Gastrocnemius medialis (tissue), 4 donors: ENCODE measurements at regions of chr4 and their contacts with region 1.

Region 1: GRCh38 chr4:85968945-85969819 is 390.7 kb downstream of the MAPK10 start:
- DNase-seq: no peak
- ATAC-seq: peak; percentile 64 to 72
- H3K4me3 ChIP-seq: no peak overlapping the region
- H3K27ac ChIP-seq: no peak overlapping the region
- H3K4me1 ChIP-seq: peaks cover 0 to 7% of the 10 kb centered on the region in 2 donors
- H3K27me3 ChIP-seq: no peaks in the 10 kb centered on the region
- CTCF ChIP-seq: peak in 4 of 5 experiments; percentile 43 to 62 (median 50)
- POLR2A ChIP-seq: no peak

Region 2: DNA sequence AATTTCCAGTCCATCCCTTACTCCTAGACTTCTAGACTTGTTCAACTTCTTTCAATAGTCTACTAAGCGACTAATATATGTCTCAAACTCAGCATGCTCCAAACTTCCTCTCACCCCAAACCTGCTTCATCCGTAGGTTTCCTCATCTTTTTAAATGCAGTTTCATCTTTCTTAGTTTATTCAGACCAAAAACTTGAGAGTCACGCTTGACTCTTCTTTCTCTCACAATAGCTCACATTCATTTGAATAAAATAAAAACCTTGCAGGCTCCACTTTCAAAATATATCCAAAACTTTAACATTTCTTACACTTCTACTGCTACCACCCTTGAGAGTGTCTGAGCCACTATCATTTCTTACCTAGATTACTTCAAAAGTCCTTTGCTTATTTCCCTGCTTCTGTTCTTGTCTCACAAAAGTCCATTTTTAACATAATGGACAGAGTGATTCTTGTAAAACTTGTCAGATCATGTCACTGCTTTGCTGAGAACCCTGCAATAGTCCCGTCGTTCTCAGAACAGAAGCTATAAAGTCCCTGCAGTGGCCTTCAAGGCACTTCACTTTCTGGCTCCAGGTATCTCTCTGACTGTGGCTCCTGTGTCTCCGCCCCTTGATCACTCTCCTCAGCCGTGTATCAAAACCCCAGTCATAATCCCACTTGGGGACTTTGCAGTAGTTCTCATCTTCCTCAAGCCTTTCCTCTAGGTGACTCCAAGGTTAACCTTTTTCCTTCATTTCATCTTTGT is 326.7 kb before region 1 on chr4:
- in situ Hi-C with region 1: no loop called
- intact Hi-C with region 1: no loop called
- DNase-seq: no peak
- ATAC-seq: no peak
- H3K4me3 ChIP-seq: no peak overlapping the region
- H3K27ac ChIP-seq: no peak overlapping the region
- H3K4me1 ChIP-seq: no peaks in the 10 kb centered on the region
- H3K27me3 ChIP-seq: no peaks in the 10 kb centered on the region
- CTCF ChIP-seq: no peak
- POLR2A ChIP-seq: no peak

Region 3: GRCh38 chr4:85756938-85757337 is 212.2 kb before region 1 on chr4:
- in situ Hi-C with region 1: no loop called
- intact Hi-C with region 1: loop called (anchors 5 kb)
- DNase-seq: no peak
- ATAC-seq: no peak
- H3K4me3 ChIP-seq: no peak overlapping the region
- H3K27ac ChIP-seq: no peak overlapping the region
- H3K4me1 ChIP-seq: peaks cover 1 to 4% of the 10 kb centered on the region in 2 donors
- H3K27me3 ChIP-seq: no peaks in the 10 kb centered on the region
- CTCF ChIP-seq: peak in 2 of 5 experiments; percentile 37 to 46
- POLR2A ChIP-seq: no peak

Region 4: DNA sequence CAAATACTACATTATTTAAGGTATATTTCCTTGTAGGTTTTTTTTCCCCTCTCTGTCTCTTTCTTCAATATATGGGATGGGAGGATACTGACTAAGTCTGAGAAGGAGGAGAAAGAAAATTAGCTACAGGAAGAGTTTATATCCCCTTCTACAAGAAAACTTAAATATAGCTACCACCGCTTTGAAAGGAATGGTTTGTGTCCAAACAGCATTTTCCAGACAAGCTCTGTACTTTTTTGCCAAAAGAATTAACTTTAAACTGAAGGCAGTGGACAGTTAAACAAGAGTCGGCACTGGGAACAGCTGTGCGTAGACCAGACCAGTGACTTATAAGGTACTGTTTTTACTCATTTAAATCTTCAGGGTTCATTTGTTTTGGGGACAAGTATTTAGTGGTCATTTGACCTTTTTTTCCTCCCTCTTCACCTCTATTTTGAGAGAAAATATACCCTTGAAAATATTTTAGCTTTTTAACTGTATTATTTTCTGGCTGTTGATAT is 190.5 kb before region 1 on chr4:
- in situ Hi-C with region 1: loop called in 1 of 4 experiments (anchors 25 kb)
- intact Hi-C with region 1: no loop called
- DNase-seq: no peak
- ATAC-seq: peak in 1 of 2 donors; percentile 30
- H3K4me3 ChIP-seq: peak overlapping the region; percentile 1 to 34 (median 10)
- H3K27ac ChIP-seq: peak overlapping the region; percentile 21 to 60 (median 54)
- H3K4me1 ChIP-seq: peaks cover 17 to 22% of the 10 kb centered on the region in 2 donors
- H3K27me3 ChIP-seq: no peaks in the 10 kb centered on the region
- CTCF ChIP-seq: no peak
- POLR2A ChIP-seq: no peak

Region 5: GRCh38 chr4:85798012-85798770 is 171.0 kb before region 1 on chr4:
- in situ Hi-C with region 1: loop called in 3 of 4 experiments (anchors 5 to 25 kb)
- intact Hi-C with region 1: loop called (anchors 2 kb)
- DNase-seq: no peak
- ATAC-seq: no peak
- H3K4me3 ChIP-seq: no peak overlapping the region
- H3K27ac ChIP-seq: no peak overlapping the region
- H3K4me1 ChIP-seq: peaks cover 0 to 5% of the 10 kb centered on the region in 2 donors
- H3K27me3 ChIP-seq: no peaks in the 10 kb centered on the region
- CTCF ChIP-seq: no peak
- POLR2A ChIP-seq: no peak

Region 6: GRCh38 chr4:85860066-85860740 is 109.0 kb before region 1 on chr4:
- in situ Hi-C with region 1: no loop called
- intact Hi-C with region 1: no loop called
- DNase-seq: no peak
- ATAC-seq: peak; percentile 36 to 59
- H3K4me3 ChIP-seq: no peak overlapping the region
- H3K27ac ChIP-seq: peak overlapping the region in 3 of 4 donors; percentile 2 to 45 (median 16)
- H3K4me1 ChIP-seq: peaks cover 13 to 18% of the 10 kb centered on the region in 2 donors
- H3K27me3 ChIP-seq: no peaks in the 10 kb centered on the region
- CTCF ChIP-seq: no peak
- POLR2A ChIP-seq: no peak

Region 7: GRCh38 chr4:85979276-85979675 is 10.1 kb after region 1 on chr4:
- in situ Hi-C with region 1: no loop called
- intact Hi-C with region 1: no loop called
- DNase-seq: no peak
- ATAC-seq: no peak
- H3K4me3 ChIP-seq: no peak overlapping the region
- H3K27ac ChIP-seq: no peak overlapping the region
- H3K4me1 ChIP-seq: no peaks in the 10 kb centered on the region
- H3K27me3 ChIP-seq: no peaks in the 10 kb centered on the region
- CTCF ChIP-seq: no peak
- POLR2A ChIP-seq: no peak